Heart right ventricle (tissue), 16 donors: ENCODE measurements at regions of chr3 and their contacts with region 1.

Region 1: GRCh38 chr3:114383875-114384557 is 90.2 kb downstream of the TIGIT start:
- DNase-seq: peak; percentile 75 to 86
- ATAC-seq: peak; percentile 80 to 89 (median 86)
- H3K4me3 ChIP-seq: peak overlapping the region in 9 of 10 donors; percentile 24 to 55 (median 43)
- H3K27ac ChIP-seq: peak overlapping the region; percentile 32 to 83 (median 70)
- H3K4me1 ChIP-seq: peaks cover 10 to 51% (median 37%) of the 10 kb centered on the region in 9 donors
- H3K27me3 ChIP-seq: no peaks in the 10 kb centered on the region
- CTCF ChIP-seq: peak; percentile 89 to 97 (median 94)

Region 2: DNA sequence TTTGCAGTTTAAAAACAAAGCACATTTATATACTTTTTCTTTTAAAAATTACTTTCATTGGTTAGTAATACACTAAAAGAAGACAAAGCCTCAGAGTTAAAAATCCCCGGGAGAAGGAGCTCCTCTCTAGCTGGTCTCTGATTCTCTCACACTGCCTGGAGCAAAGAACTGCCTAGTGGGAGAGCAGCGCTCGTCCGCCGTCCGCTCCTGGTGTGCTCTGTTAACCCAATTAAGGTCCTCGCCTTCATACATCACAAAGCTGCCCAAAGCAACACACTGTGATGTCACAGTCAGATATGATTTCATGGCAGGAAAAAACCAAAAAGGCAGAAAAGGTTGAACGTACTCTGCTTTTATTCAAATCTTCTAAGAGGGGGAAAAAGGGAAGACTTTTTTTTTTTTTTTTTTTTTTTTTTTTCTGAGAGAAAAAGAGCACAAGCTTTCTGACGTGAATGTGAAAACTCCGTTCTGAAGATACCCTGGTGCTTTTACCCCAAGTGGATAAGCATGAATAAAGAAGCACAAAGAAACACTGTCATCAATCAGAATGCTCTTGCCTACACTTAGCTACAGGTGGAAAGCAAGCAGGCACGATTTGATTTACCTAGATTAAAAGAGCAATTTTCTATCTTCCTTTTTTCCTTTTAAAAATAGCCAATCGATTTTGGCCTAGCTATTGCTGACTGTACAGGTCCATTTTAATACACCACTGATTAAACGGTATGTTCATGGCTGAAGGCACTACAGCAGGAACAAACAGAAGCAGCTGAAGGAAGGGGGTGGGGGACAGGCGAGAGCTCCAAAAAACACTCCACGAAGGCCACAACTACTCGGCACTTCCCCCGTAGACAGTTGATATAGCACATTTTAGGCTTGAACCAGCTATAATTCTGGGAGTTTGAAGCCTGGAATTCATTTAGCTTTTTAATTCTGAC is 25.0 kb after region 1 on chr3:
- intact Hi-C with region 1: loop called in 1 of 10 experiments (anchors 2 kb)
- DNase-seq: no peak
- ATAC-seq: peak in 2 of 8 donors; percentile 48 to 49
- H3K4me3 ChIP-seq: peak overlapping the region in 2 of 10 donors; percentile 2 to 5
- H3K27ac ChIP-seq: peak overlapping the region in 6 of 10 donors; percentile 32 to 74 (median 64)
- H3K4me1 ChIP-seq: peaks cover 17 to 98% (median 80%) of the 10 kb centered on the region in 9 donors
- H3K27me3 ChIP-seq: no peaks in the 10 kb centered on the region
- CTCF ChIP-seq: no peak

Region 3: DNA sequence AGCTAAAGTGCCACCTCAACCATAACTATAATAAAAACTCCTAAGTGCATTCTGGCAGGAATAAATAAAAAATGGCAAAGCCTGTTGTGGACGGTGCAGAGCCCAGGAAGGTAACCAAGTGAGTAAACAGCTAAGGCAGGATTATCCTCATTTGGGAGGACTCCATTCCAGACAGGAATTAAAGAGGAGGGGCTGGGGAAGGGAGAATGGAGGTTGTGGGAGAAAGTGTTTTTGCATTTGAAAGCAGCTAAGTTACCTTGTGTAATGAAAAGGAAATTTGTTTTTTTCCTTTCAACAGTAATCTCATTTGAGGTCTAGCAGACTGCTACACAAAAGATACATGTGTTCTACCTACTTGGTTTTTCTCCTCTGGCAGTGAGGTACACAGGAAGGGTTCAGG is 158.3 kb after region 1 on chr3:
- intact Hi-C with region 1: no loop called
- DNase-seq: no peak
- ATAC-seq: no peak
- H3K4me3 ChIP-seq: no peak overlapping the region
- H3K27ac ChIP-seq: no peak overlapping the region
- H3K4me1 ChIP-seq: peaks cover 0 to 12% (median 0%) of the 10 kb centered on the region in 9 donors
- H3K27me3 ChIP-seq: no peaks in the 10 kb centered on the region
- CTCF ChIP-seq: no peak

Region 4: GRCh38 chr3:114582929-114583328 is 198.9 kb after region 1 on chr3:
- intact Hi-C with region 1: loop called in 2 of 10 experiments (anchors 10 kb)
- DNase-seq: no peak
- ATAC-seq: no peak
- H3K4me3 ChIP-seq: no peak overlapping the region
- H3K27ac ChIP-seq: peak overlapping the region in 3 of 10 donors; percentile 9 to 80 (median 21)
- H3K4me1 ChIP-seq: peaks cover 3 to 49% (median 33%) of the 10 kb centered on the region in 9 donors
- H3K27me3 ChIP-seq: no peaks in the 10 kb centered on the region
- CTCF ChIP-seq: no peak

Region 5: GRCh38 chr3:114809668-114810413 is 425.8 kb after region 1 on chr3:
- intact Hi-C with region 1: loop called in 1 of 10 experiments (anchors 10 kb)
- DNase-seq: no peak
- ATAC-seq: peak in 2 of 8 donors; percentile 28 to 31
- H3K4me3 ChIP-seq: no peak overlapping the region
- H3K27ac ChIP-seq: no peak overlapping the region
- H3K4me1 ChIP-seq: no peaks in the 10 kb centered on the region
- H3K27me3 ChIP-seq: no peaks in the 10 kb centered on the region
- CTCF ChIP-seq: no peak

Region 6: GRCh38 chr3:115040673-115041286 is 656.8 kb after region 1 on chr3:
- intact Hi-C with region 1: loop called in 1 of 10 experiments (anchors 10 kb)
- DNase-seq: peak in 1 of 2 donors; percentile 6
- ATAC-seq: no peak
- H3K4me3 ChIP-seq: no peak overlapping the region
- H3K27ac ChIP-seq: no peak overlapping the region
- H3K4me1 ChIP-seq: peaks cover 0 to 24% (median 6%) of the 10 kb centered on the region in 9 donors
- H3K27me3 ChIP-seq: no peaks in the 10 kb centered on the region
- CTCF ChIP-seq: peak; percentile 33 to 75 (median 64)

Region 7: GRCh38 chr3:115147329-115148141 is 763.5 kb after region 1 on chr3:
- intact Hi-C with region 1: loop called in 1 of 10 experiments (anchors 5 kb)
- DNase-seq: peak; percentile 98 to 100
- ATAC-seq: peak; percentile 88 to 96 (median 93)
- H3K4me3 ChIP-seq: peak overlapping the region; percentile 61 to 94 (median 86)
- H3K27ac ChIP-seq: peak overlapping the region; percentile 94 to 99 (median 97)
- H3K4me1 ChIP-seq: peaks cover 0 to 26% (median 16%) of the 10 kb centered on the region in 9 donors
- H3K27me3 ChIP-seq: no peaks in the 10 kb centered on the region
- CTCF ChIP-seq: peak in 2 of 9 donors; percentile 17 to 22